ENCODE measurements at regions of chr12 and their contacts with region 1.

Region 1: GRCh38 chr12:54958048-54958658 is 26.4 kb downstream of the TESPA1 start:
- DNase-seq: no peak
- H3K4me3 ChIP-seq: no peak overlapping the region
- H3K27ac ChIP-seq: no peak overlapping the region
- H3K4me1 ChIP-seq: peaks cover 0 to 5% (median 0%) of the 10 kb centered on the region in 4 experiments; a peak in 2 of 7 replicates
- H3K27me3 ChIP-seq: no peaks in the 10 kb centered on the region
- CTCF ChIP-seq: peak in 2 of 3 experiments; percentile 61 to 70; a peak in 2 of 4 replicates
- EP300 ChIP-seq: no peak
- POLR2A ChIP-seq: no peak
- RAD21 ChIP-seq: peak; percentile 94 to 97

Region 2: GRCh38 chr12:54723379-54724256 is 234.5 kb before region 1 on chr12:
- CTCF ChIA-PET with region 1: interaction called, 11 read pairs
- POLR2A ChIA-PET with region 1: no interaction called
- DNase-seq: no peak
- H3K4me3 ChIP-seq: no peak overlapping the region
- H3K27ac ChIP-seq: no peak overlapping the region
- H3K4me1 ChIP-seq: peaks cover 0 to 5% (median 3%) of the 10 kb centered on the region in 4 experiments; a peak in 2 of 7 replicates
- H3K27me3 ChIP-seq: no peaks in the 10 kb centered on the region
- CTCF ChIP-seq: peak in 2 of 3 experiments; percentile 59 to 68; a peak in 3 of 4 replicates
- EP300 ChIP-seq: no peak
- POLR2A ChIP-seq: no peak
- RAD21 ChIP-seq: peak; percentile 21 to 39; a peak in 3 of 4 replicates

Region 3: GRCh38 chr12:54749191-54749818 is 208.8 kb before region 1 on chr12:
- CTCF ChIA-PET with region 1: interaction called, 89 read pairs
- POLR2A ChIA-PET with region 1: no interaction called
- DNase-seq: no peak
- H3K4me3 ChIP-seq: no peak overlapping the region
- H3K27ac ChIP-seq: no peak overlapping the region
- H3K4me1 ChIP-seq: no peaks in the 10 kb centered on the region
- H3K27me3 ChIP-seq: no peaks in the 10 kb centered on the region
- CTCF ChIP-seq: peak in 2 of 3 experiments; percentile 52 to 71; a peak in 2 of 4 replicates
- EP300 ChIP-seq: no peak
- POLR2A ChIP-seq: no peak
- RAD21 ChIP-seq: peak; percentile 79 to 81

Region 4: DNA sequence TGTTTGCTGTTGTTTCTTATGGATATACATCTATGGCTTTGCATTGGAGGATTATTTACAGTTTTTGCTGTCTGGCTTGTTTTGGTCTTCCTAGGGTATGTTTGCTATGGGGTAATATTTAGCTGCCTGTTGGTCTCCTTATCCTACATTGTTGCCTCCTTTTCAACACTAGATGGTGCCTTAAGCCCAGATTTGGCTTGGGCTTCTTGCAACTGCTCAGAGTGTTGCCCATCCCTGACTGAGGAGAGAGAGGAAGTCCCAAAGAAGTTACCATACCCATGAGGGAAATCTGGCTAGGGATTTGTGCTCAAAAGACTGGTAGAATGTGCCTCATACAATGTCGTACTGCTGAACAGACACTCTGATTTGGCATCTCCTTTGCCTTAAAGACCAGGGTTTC is 198.4 kb before region 1 on chr12:
- CTCF ChIA-PET with region 1: interaction called, 58 read pairs
- POLR2A ChIA-PET with region 1: interaction called, 4 read pairs
- DNase-seq: peak; percentile 25 to 44
- H3K4me3 ChIP-seq: no peak overlapping the region
- H3K27ac ChIP-seq: no peak overlapping the region
- H3K4me1 ChIP-seq: no peaks in the 10 kb centered on the region
- H3K27me3 ChIP-seq: no peaks in the 10 kb centered on the region
- CTCF ChIP-seq: peak in 2 of 3 experiments; percentile 73 to 90; a peak in 3 of 4 replicates
- EP300 ChIP-seq: no peak
- POLR2A ChIP-seq: no peak
- RAD21 ChIP-seq: peak; percentile 93 to 97

Region 5: DNA sequence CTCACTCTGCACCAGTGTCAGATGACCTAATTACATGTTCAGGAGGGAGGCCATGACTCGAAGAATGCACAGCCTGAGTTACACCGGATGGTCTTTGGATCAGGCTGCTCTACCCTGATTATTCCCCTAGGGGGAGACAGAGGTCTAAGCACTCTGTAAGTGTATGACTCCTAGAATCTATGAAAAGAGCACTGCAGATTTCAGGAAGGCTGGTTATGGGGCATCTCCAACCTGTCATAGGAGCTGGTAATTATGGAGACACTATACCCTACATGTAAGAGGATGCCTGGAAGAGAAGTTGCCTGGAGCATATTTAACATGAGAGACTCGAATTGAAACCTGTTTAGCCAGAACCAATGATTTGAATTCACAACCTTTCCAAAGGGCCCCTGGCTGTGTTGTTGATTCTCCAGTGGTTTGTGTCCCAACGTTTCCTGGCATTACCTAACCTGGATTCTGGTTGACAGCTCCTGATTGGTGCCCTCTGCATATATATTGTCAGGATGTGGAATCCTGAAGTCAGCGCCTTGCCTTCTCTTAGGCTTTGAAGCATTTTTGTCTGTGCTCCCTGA is 104.1 kb before region 1 on chr12 and contains the start of gene MUCL1:
- CTCF ChIA-PET with region 1: interaction called, 46 read pairs
- POLR2A ChIA-PET with region 1: no interaction called
- DNase-seq: peak; percentile 49 to 86
- H3K4me3 ChIP-seq: no peak within 1 kb of the TSS
- H3K27ac ChIP-seq: no peak within 1 kb of the TSS
- H3K4me1 ChIP-seq: peaks cover 0 to 7% (median 0%) of the 10 kb centered on the region in 4 experiments; a peak in 1 of 7 replicates
- H3K27me3 ChIP-seq: peaks cover 0 to 5% (median 1%) of the 10 kb centered on the region in 4 experiments; a peak in 4 of 7 replicates
- CTCF ChIP-seq: peak; percentile 35 to 87 (median 79)
- EP300 ChIP-seq: no peak
- POLR2A ChIP-seq: no peak
- RAD21 ChIP-seq: peak; percentile 89 to 94
- total RNA-seq, gene MUCL1: not detected in 2 replicates

Region 6: DNA sequence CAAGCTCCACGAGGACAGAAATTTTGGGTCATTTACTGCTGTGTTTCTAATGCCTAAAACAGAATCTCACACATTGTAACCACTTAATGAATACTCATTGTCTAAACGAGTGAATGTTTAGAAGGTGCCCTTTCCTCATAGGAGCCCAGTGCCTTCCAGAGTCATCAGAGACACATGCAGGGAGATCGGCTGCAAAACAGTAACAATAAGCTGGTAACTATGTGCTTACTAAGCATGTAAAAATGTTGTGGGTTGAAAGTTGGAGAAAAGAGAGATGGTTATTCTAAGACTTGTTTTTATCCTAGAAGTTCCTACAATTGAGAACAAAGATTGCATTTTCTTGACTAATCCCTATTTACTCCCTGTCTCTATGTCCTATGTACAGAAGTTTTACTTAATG is 19.0 kb after region 1 on chr12:
- CTCF ChIA-PET with region 1: interaction called, 10 read pairs
- POLR2A ChIA-PET with region 1: no interaction called
- DNase-seq: no peak
- H3K4me3 ChIP-seq: no peak overlapping the region
- H3K27ac ChIP-seq: no peak overlapping the region
- H3K4me1 ChIP-seq: peaks cover 0 to 4% (median 1%) of the 10 kb centered on the region in 4 experiments; a peak in 1 of 7 replicates
- H3K27me3 ChIP-seq: no peaks in the 10 kb centered on the region
- CTCF ChIP-seq: no peak
- EP300 ChIP-seq: no peak
- POLR2A ChIP-seq: no peak
- RAD21 ChIP-seq: no peak

Measured in H1 (cell line).